GM18951 (cell line): ENCODE measurements at regions of chr22 and their contacts with region 1.

Region 1: DNA sequence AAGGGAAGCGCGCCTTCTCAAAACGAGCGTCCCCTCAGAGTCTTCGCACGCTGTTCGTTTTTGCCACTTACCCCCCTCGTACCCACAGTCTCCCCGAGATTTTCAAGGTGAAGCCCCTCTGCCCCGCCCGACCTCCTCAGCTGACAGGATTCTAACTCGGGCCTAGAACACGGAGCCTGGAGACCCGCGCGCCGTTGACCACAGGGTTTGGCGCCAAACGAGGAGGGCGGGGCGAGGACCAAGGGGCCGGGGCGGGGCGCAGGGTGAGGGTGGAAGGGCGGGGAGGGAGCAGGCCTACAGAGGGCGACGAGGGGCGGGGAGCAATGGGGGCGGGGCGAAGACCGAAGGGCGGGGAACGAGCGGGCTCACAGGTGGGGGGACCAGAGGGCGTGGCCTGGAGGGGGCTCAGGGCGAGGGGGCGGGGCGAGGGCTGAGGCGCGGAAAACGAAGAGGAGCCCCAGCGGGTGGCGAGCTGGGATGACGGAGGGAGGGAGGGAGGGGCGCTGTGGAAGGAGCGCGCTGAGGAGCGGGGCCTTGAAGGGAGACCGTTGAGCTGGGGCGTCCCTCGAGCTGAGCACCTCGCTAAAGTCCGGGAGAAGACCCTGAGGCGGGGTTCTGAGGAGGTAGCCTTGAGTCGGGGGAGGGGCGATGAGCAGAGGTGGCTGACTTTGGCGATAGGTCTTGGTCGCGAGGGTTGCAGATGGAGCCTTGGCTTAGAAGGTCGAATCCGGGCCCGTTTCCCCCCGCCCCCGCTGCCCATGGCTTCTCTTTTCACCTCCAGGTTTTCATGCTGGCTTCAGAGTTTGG is at the start of gene DMC1:
- POLR2A ChIP-seq: peak; percentile 55

Region 2: DNA sequence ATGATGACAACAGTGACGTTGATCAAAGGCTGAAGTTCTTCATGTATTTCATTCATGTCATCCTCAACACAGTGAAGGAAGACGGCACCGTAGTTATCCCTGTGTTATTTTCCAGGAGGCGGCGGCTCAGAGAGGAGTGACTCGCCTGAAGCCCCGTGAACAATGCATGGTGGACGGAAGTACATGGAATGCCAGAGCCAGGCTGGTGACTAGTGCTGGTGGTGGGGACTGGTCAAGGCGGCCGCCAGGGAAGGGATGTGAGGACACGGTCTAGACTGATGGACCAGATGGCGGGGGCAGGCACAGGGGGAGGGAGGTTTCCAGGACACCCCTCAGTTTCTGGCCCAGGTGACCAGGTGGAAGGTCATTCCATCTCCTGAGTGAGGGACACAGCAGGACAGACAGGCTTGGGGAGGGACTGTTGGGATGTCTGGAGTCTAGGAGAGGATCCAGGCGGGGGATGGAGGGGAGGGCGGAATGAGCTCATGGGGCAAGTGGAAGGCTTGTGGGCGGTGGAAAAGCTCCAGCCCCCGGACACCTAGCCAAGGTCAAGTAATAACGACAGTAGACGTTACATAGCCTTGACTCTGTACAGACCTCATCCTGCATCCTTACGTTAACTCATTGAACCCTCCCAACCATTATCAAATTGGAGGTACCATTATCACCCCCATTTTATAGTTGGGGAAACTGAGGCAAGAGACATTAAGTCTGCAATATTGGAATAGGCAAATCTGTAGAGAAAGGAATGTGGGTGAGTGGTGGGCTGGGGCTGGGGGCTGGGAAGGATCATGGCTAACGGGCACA is 529.0 kb before region 1 on chr22:
- in situ Hi-C with region 1: loop called (anchors 10 kb)
- POLR2A ChIP-seq: no peak

Region 3: GRCh38 chr22:38684895-38685294 is 114.7 kb after region 1 on chr22:
- in situ Hi-C with region 1: no loop called
- POLR2A ChIP-seq: no peak

Region 4: GRCh38 chr22:38831166-38831945 is 261.2 kb after region 1 on chr22:
- in situ Hi-C with region 1: no loop called
- POLR2A ChIP-seq: no peak